ENCODE measurements at regions of chr1 and their contacts with region 1.

Region 1: GRCh38 chr1:161045750-161046571 is at the start of gene USF1:
- DNase-seq: peak; percentile 85 to 93
- ATAC-seq: peak; percentile 97
- H3K4me3 ChIP-seq: peak within 1 kb of the TSS; percentile 87 to 99 (median 90)
- H3K27ac ChIP-seq: peak within 1 kb of the TSS; percentile 88 to 98 (median 94)
- H3K4me1 ChIP-seq: peaks cover 17 to 21% of the 10 kb centered on the region in 2 donors
- H3K27me3 ChIP-seq: no peaks in the 10 kb centered on the region
- CTCF ChIP-seq: no peak
- POLR2A ChIP-seq: peak in 1 of 2 donors; percentile 68
- total RNA-seq, gene USF1: 41.9 to 55.1 (median 49.1) TPM

Region 2: GRCh38 chr1:160997323-160998038 is 48.5 kb before region 1 on chr1:
- in situ Hi-C with region 1: no loop called
- intact Hi-C with region 1: loop called (anchors 2 kb)
- DNase-seq: peak in 1 of 2 donors; percentile 16
- ATAC-seq: peak; percentile 56 to 72
- H3K4me3 ChIP-seq: no peak overlapping the region
- H3K27ac ChIP-seq: peak overlapping the region in 3 of 4 donors; percentile 59 to 70 (median 62)
- H3K4me1 ChIP-seq: no peaks in the 10 kb centered on the region
- H3K27me3 ChIP-seq: no peaks in the 10 kb centered on the region
- CTCF ChIP-seq: peak in 3 of 5 experiments; percentile 47 to 53 (median 51)
- POLR2A ChIP-seq: no peak

Region 3: GRCh38 chr1:161098210-161099068 is 52.5 kb after region 1 on chr1 and contains the start of gene KLHDC9:
- in situ Hi-C with region 1: no loop called
- intact Hi-C with region 1: loop called (anchors 2 kb)
- DNase-seq: peak; percentile 28 to 68
- ATAC-seq: peak; percentile 70 to 84
- H3K4me3 ChIP-seq: peak within 1 kb of the TSS; percentile 62 to 80 (median 66)
- H3K27ac ChIP-seq: peak within 1 kb of the TSS; percentile 62 to 74 (median 68)
- H3K4me1 ChIP-seq: peaks cover 5 to 19% of the 10 kb centered on the region in 2 donors
- H3K27me3 ChIP-seq: no peaks in the 10 kb centered on the region
- CTCF ChIP-seq: no peak
- POLR2A ChIP-seq: no peak
- total RNA-seq, gene KLHDC9: 0.89 to 2.4 (median 1.3) TPM

Region 4: GRCh38 chr1:161159087-161159912 is 113.3 kb after region 1 on chr1 and contains the start of gene USP21:
- in situ Hi-C with region 1: loop called in 1 of 4 experiments (anchors 10 kb)
- intact Hi-C with region 1: loop called (anchors 2 kb)
- DNase-seq: peak; percentile 88 to 89
- ATAC-seq: peak; percentile 96 to 97
- H3K4me3 ChIP-seq: peak within 1 kb of the TSS; percentile 82 to 100 (median 95)
- H3K27ac ChIP-seq: peak within 1 kb of the TSS; percentile 90 to 95 (median 92)
- H3K4me1 ChIP-seq: peaks cover 25 to 31% of the 10 kb centered on the region in 2 donors
- H3K27me3 ChIP-seq: no peaks in the 10 kb centered on the region
- CTCF ChIP-seq: peak in 2 of 5 experiments; percentile 10 to 32
- POLR2A ChIP-seq: peak; percentile 47 to 54
- total RNA-seq, gene USP21: 16.5 to 20.8 (median 18.0) TPM

Region 5: DNA sequence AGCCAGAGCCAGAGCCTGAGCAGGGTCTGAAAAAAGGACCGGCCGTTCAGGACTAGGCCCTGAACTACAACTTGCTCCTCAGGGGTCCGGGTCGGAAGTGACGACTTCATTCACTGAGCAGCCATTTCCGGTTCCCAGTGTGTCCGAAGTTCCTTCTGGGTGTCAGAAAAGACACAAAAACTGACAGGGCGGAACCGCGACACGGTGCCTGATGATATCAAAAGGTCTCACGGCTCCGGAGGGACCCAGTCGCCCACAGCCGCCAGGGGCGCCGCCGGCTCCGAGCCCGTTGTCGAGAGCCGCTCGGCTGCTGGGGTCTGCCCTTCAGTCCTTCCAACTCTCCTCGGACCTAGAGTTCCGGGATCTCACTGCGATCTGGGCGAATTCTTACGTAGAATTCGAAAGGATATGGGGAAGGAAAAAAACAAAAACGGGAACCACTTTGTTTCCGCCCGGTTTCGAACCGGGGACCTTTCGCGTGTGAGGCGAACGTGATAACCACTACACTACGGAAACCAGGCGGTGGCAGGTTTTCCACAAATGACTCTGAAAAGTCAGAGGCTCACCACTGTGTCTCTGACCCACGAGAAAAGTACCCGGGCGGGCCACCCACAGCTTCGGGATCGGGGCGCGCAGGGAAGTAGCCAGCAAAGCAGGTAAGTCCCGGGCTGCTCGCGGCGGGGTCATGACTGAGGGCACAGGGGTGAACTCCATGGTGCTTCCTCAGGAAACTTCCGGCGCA is 353.5 kb after region 1 on chr1:
- in situ Hi-C with region 1: no loop called
- intact Hi-C with region 1: loop called (anchors 1 kb)
- DNase-seq: peak; percentile 86 to 90
- ATAC-seq: peak; percentile 92 to 93
- H3K4me3 ChIP-seq: peak overlapping the region; percentile 78 to 89 (median 86)
- H3K27ac ChIP-seq: peak overlapping the region; percentile 96 to 99 (median 99)
- H3K4me1 ChIP-seq: peaks cover 4 to 7% of the 10 kb centered on the region in 2 donors
- H3K27me3 ChIP-seq: no peaks in the 10 kb centered on the region
- CTCF ChIP-seq: peak; percentile 25 to 62 (median 57)
- POLR2A ChIP-seq: peak; percentile 83 to 84

Measured in gastrocnemius medialis (tissue), 4 donors.